ENCODE measurements at regions of chr9 and their contacts with region 1.

Region 1: DNA sequence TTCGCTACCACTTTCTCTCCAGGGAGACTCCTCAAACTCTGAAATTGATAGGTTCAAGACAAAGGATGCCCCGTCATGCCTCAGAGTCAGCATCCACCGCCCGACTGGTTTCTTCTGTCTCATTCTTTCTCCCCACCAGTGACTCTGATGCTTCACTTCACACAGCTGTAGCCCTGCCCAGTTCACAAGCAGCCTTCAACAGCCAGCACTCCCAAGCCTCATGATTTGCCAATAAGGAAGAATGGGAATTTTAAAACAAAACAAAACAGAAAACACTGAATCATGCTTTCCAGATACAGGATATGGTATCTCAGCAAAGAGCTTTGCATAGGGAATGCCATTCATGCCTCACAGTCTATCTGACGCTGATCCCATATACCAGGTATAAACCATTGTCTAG is 371.2 kb upstream of the RORB start:
- DNase-seq: no peak
- H3K4me3 Mint-ChIP-seq: no peak overlapping the region
- H3K27ac Mint-ChIP-seq: no peak overlapping the region
- H3K4me1 Mint-ChIP-seq: peaks cover 15% of the 10 kb centered on the region
- H3K27me3 Mint-ChIP-seq: no peaks in the 10 kb centered on the region

Region 2: DNA sequence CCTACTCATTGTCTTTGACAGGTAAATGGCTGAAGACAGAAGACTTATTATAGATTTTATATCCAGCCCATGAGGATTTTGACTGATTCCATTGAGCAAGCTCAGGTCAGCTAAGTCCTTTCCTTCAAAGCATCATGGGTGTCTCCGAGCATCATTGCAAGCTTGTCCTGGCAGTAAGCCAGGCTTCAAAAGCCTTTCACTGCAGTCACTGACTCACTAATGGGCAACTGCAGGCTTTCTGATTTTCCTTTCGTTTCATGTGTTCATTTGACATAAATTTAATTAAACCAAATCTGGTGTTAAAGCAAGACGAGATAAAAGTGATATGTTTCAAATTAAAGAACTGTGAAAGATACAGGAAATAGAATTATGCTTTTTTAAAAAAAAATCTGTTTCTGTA is 548.1 kb before region 1 on chr9:
- intact Hi-C with region 1: no loop called
- DNase-seq: no peak
- H3K4me3 Mint-ChIP-seq: no peak overlapping the region
- H3K27ac Mint-ChIP-seq: no peak overlapping the region
- H3K4me1 Mint-ChIP-seq: no peaks in the 10 kb centered on the region
- H3K27me3 Mint-ChIP-seq: no peaks in the 10 kb centered on the region

Region 3: GRCh38 chr9:73841024-73841423 is 284.9 kb before region 1 on chr9:
- intact Hi-C with region 1: no loop called
- DNase-seq: no peak
- H3K4me3 Mint-ChIP-seq: no peak overlapping the region
- H3K27ac Mint-ChIP-seq: no peak overlapping the region
- H3K4me1 Mint-ChIP-seq: no peaks in the 10 kb centered on the region
- H3K27me3 Mint-ChIP-seq: no peaks in the 10 kb centered on the region

Region 4: DNA sequence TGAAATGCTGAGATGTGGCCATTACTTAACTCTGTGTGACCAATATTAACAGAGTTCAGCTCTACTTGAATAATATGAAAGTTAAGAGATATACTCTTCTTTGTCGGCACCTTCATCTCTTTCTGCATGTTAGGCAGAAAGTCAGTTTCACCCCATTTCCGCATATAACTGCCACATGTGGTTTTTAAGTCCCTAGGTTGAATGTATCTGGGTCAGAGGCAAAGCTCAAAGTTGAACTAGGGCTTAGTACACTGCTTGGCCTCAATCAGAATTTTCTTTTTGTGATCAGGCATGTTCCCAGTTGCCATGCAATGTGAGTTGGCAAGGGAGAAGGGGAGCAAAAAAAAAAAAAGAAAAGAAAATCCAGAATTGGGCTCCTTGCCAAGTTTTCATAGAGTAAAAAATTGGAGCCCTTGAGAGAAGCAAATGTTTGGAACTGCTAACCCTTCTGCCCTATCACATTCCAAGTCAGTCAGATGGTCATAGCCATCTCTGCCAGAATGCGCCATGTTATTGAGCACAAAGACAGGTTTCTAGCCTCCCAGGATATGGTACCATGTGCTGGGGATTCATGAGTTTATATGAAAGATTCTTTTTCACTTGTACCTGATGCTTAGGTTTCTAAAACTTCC is 120.0 kb after region 1 on chr9:
- intact Hi-C with region 1: loop called (anchors 10 kb)
- DNase-seq: peak; percentile 9
- H3K4me3 Mint-ChIP-seq: no peak overlapping the region
- H3K27ac Mint-ChIP-seq: peak overlapping the region; percentile 80
- H3K4me1 Mint-ChIP-seq: peaks cover 22% of the 10 kb centered on the region
- H3K27me3 Mint-ChIP-seq: no peaks in the 10 kb centered on the region